Activated T-helper 1 cell treated with anti-CD3 and anti-CD28 coated beads, Interleukin-12 subunit alpha, Interleukin-12 subunit beta, Interleukin-2, Interleukin-4 antibody, amounts not matched to agents 30 ng/mL and 10 ng/mL and 1 ng/mL, durations not matched to agents 14 hours and 24 hours and 36 hours (primary cell): ENCODE measurements at regions of chr5 and their contacts with region 1.

Region 1: DNA sequence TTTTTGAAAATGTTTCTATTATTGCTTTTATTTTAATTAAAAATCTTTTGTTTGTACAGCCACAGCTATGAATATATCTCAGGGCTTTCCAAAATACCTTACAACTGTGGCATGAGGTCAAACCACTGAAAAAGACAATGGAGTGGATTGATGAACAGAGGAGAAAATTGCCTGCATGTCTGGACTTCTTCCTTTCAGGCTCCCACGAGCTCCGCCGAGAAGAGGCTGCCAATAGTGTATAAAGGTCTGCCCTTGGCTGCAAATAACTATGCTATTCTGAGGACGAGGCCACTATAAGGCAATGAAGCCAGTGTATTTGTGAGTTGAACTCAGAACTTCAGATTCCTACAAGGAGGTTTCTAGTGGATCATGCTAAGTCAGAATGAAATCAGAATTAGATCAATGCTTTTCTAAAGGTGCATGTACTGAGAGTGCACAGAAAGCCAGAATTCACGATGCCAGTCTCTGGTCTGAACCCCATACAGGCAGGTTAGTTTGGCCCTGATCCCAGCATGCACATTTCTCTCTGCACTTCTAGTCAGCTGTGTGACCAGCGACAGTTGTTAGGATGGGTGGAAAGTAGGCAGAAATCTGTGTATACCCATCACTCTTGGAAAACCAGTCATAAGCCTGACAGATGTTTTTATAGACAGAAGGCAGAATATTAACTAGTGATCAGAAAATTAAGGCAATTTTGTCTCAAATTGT is 42.7 kb upstream of the PLPP1 start:
- DNase-seq: no peak
- H3K4me3 Mint-ChIP-seq: no peak overlapping the region
- H3K27ac Mint-ChIP-seq: peak overlapping the region; percentile 21
- H3K4me1 Mint-ChIP-seq: peaks cover 33% of the 10 kb centered on the region
- H3K27me3 Mint-ChIP-seq: no peaks in the 10 kb centered on the region

Region 2: DNA sequence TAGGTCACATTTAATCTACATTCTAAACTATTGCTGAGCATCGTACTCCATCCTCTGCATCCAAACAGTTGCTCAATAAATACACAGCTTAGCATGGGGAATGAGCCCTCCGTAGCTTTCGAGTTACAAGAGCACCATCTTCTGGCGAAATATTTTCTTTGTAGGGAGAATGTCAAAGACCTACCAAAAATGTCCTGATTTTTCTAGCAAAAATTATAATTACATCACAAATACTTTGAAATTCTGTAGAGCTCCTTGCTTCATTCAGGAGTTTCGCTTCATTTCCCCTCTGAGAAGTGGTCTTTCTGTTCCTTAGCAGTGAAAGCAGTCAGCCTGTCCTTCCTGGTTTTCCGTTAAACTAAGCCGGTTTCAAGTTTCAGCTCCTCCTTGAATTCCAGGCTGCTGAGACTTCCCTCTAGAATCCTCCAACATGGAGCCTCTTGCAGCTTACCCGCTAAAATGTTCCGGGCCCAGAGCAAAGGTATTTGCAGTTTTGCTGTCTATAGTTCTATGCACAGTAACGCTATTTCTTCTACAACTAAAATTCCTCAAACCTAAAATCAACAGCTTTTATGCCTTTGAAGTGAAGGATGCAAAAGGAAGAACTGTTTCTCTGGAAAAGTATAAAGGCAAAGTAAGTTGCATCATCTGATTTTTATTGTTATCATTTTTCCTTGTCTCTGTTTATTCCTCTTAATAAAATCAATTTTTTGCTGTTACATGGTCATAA is 417.6 kb before region 1 on chr5 and contains the start of gene GPX8:
- intact Hi-C with region 1: no loop called
- DNase-seq: no peak
- H3K4me3 Mint-ChIP-seq: no peak within 1 kb of the TSS
- H3K27ac Mint-ChIP-seq: no peak within 1 kb of the TSS
- H3K4me1 Mint-ChIP-seq: peaks cover 8% of the 10 kb centered on the region
- H3K27me3 Mint-ChIP-seq: peaks cover 64% of the 10 kb centered on the region
- total RNA-seq, gene GPX8: not detected in 2 replicates

Region 3: GRCh38 chr5:55593115-55593472 is 15.6 kb after region 1 on chr5:
- intact Hi-C with region 1: loop called (anchors 1 kb)
- DNase-seq: no peak
- H3K4me3 Mint-ChIP-seq: no peak overlapping the region
- H3K27ac Mint-ChIP-seq: no peak overlapping the region
- H3K4me1 Mint-ChIP-seq: peaks cover 46% of the 10 kb centered on the region
- H3K27me3 Mint-ChIP-seq: no peaks in the 10 kb centered on the region

Region 4: DNA sequence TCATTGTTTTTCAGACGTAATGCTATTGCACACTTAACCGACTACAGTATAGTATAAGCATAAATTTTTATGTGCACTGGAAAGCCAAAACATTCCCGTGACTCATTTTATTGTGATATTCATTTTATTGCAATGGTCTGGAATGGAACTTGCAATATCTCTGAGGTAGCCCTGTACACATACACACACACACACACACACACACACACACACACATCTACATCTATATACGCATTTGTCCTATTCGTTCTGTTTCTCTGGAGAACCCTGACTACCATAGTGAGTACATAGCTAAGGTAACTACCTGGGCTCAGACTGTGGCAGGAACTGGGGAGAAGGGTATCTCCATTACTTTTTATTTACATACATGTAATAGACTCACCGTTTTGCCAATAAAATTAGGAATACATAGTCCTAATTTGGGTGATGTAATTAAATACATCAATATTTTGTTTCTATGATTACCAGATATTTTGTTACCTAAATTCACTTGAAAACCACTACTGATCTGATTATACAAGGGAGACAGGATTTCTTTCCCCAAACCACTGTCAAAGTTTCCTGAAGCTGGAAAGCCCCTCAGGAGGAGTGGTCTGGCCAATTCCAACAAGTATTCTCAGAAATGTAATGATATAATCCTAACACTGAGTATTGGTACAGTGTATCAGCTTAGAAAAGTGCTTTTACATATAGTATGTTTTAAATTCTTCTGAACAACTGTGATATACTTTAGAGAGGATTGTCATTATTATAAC is 31.3 kb after region 1 on chr5:
- intact Hi-C with region 1: loop called (anchors 2 kb)
- DNase-seq: no peak
- H3K4me3 Mint-ChIP-seq: no peak overlapping the region
- H3K27ac Mint-ChIP-seq: peak overlapping the region; percentile 31
- H3K4me1 Mint-ChIP-seq: peaks cover 13% of the 10 kb centered on the region
- H3K27me3 Mint-ChIP-seq: no peaks in the 10 kb centered on the region

Region 5: GRCh38 chr5:55650386-55650785 is 72.9 kb after region 1 on chr5:
- intact Hi-C with region 1: loop called (anchors 1 kb)
- DNase-seq: no peak
- H3K4me3 Mint-ChIP-seq: no peak overlapping the region
- H3K27ac Mint-ChIP-seq: no peak overlapping the region
- H3K4me1 Mint-ChIP-seq: peaks cover 24% of the 10 kb centered on the region
- H3K27me3 Mint-ChIP-seq: no peaks in the 10 kb centered on the region